ENCODE measurements at regions of chr2 and their contacts with region 1.

Region 1: GRCh38 chr2:27050281-27050995 is 1.0 kb upstream of the AGBL5 start:
- DNase-seq: peak; percentile 84 to 93
- ATAC-seq: peak; percentile 84 to 88 (median 86)
- H3K4me3 ChIP-seq: peak overlapping the region; percentile 92
- H3K27ac ChIP-seq: peak overlapping the region; percentile 77
- H3K4me1 ChIP-seq: peaks cover 15% of the 10 kb centered on the region
- H3K27me3 ChIP-seq: no peaks in the 10 kb centered on the region
- CTCF ChIP-seq: peak; percentile 48

Region 2: GRCh38 chr2:27010139-27010538 is 40.3 kb before region 1 on chr2:
- intact Hi-C with region 1: loop called in 1 of 2 experiments (anchors 1 kb)
- DNase-seq: no peak
- ATAC-seq: no peak
- H3K4me3 ChIP-seq: no peak overlapping the region
- H3K27ac ChIP-seq: peak overlapping the region; percentile 31
- H3K4me1 ChIP-seq: peaks cover 33% of the 10 kb centered on the region
- H3K27me3 ChIP-seq: no peaks in the 10 kb centered on the region
- CTCF ChIP-seq: no peak

Region 3: DNA sequence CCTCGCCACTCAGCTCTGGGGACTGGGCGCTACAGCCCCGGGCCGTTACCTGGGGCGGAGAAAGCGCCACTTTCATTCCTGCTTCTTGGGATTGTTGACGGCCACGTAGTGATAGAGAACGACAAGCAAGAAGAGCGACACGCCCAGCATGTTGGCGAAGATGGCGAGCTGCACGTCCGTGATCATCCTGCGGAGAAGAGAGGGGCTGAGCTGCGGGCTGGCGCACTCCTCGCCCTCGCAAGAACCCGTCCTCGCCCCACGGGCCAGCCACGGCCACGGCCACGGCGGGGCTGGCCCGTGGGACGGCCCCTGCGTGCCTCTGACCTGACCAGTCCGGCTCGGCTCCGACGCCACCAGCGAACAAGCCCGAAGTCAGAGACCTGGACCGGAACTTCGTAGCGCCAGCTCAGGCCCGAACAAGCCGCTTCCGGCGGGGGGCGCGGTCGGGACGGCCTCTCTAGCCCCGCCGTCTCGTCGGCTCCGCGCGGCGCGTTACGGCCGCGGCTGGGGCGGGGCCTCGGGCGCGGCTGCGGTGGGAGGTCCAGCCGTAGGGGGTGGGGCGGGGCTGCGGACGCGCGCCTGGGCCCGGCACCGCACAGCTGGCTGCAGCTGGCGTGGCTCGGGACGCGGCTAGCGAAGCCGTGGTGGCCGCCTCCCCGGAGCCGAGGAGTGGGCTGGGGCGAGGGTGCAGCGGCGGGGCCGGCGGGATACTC is 21.0 kb after region 1 on chr2 and contains the start of gene OST4:
- intact Hi-C with region 1: loop called in 1 of 2 experiments (anchors 2 kb)
- DNase-seq: peak; percentile 95 to 97
- ATAC-seq: peak; percentile 96 to 98 (median 96)
- H3K4me3 ChIP-seq: peak within 1 kb of the TSS; percentile 90
- H3K27ac ChIP-seq: peak within 1 kb of the TSS; percentile 88
- H3K4me1 ChIP-seq: peaks cover 16% of the 10 kb centered on the region
- H3K27me3 ChIP-seq: no peaks in the 10 kb centered on the region
- CTCF ChIP-seq: no peak
- total RNA-seq, gene OST4: 186 to 304 (median 236) TPM